ENCODE measurements at regions of chr1 and their contacts with region 1.

Region 1: GRCh38 chr1:206912445-206913095 is 9.2 kb downstream of the FCMR start:
- DNase-seq: peak; percentile 77
- ATAC-seq: peak; percentile 45
- H3K4me3 Mint-ChIP-seq: no peak overlapping the region
- H3K27ac Mint-ChIP-seq: peak overlapping the region; percentile 63
- H3K4me1 Mint-ChIP-seq: peaks cover 86% of the 10 kb centered on the region
- H3K27me3 Mint-ChIP-seq: no peaks in the 10 kb centered on the region
- CTCF ChIP-seq: peak; percentile 80

Region 2: GRCh38 chr1:206635080-206635977 is 277.2 kb before region 1 on chr1 and contains the start of gene DYRK3:
- CTCF ChIA-PET with region 1: interaction called, 11 read pairs
- POLR2A ChIA-PET with region 1: no interaction called
- intact Hi-C with region 1: no loop called
- DNase-seq: peak; percentile 93
- ATAC-seq: peak; percentile 93
- H3K4me3 Mint-ChIP-seq: peak within 1 kb of the TSS; percentile 78
- H3K27ac Mint-ChIP-seq: peak within 1 kb of the TSS; percentile 88
- H3K4me1 Mint-ChIP-seq: peaks cover 25% of the 10 kb centered on the region
- H3K27me3 Mint-ChIP-seq: peaks cover 28% of the 10 kb centered on the region
- CTCF ChIP-seq: no peak
- total RNA-seq, gene DYRK3: 4.7 to 4.9 TPM

Region 3: DNA sequence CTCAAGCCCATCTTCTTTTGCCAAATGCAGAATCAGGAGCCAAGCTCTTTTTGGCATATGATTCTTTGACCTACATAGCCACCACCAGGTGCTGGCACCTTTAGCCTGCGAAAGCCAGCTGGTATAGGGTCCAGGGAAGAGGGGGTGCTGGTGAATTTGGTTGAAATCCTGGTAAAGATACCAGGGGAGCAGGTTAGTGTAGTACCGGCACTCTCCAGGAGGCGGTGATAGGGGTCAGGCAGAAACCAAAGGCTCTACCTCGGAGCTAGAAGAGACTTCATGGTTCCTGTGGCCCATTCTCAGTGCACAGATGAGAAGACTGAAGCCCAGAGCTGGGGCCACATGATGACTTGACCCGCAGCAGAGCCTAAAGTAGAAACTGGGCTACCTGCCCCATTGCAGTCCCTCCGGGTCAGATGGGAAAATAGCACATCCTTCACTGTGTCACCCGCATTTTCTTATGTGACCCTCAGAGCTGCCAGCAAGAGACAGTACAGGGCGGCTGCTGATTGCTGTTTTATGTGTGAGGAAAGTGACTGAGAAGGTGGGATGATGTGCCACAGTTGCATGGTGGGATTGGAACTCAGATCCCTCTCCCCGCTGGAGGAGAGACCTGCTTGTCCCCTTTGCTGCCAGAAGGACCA is 177.9 kb before region 1 on chr1:
- CTCF ChIA-PET with region 1: interaction called, 81 read pairs
- POLR2A ChIA-PET with region 1: interaction called, 3 read pairs
- intact Hi-C with region 1: loop called (anchors 5 kb)
- DNase-seq: peak; percentile 80
- ATAC-seq: peak; percentile 48
- H3K4me3 Mint-ChIP-seq: no peak overlapping the region
- H3K27ac Mint-ChIP-seq: peak overlapping the region; percentile 22
- H3K4me1 Mint-ChIP-seq: peaks cover 64% of the 10 kb centered on the region
- H3K27me3 Mint-ChIP-seq: no peaks in the 10 kb centered on the region
- CTCF ChIP-seq: peak; percentile 93

Region 4: GRCh38 chr1:206834711-206835110 is 77.9 kb before region 1 on chr1:
- CTCF ChIA-PET with region 1: interaction called, 35 read pairs
- POLR2A ChIA-PET with region 1: no interaction called
- intact Hi-C with region 1: no loop called
- DNase-seq: no peak
- ATAC-seq: no peak
- H3K4me3 Mint-ChIP-seq: no peak overlapping the region
- H3K27ac Mint-ChIP-seq: no peak overlapping the region
- H3K4me1 Mint-ChIP-seq: peaks cover 25% of the 10 kb centered on the region
- H3K27me3 Mint-ChIP-seq: peaks cover 4% of the 10 kb centered on the region
- CTCF ChIP-seq: no peak

Region 5: GRCh38 chr1:206872139-206872538 is 40.4 kb before region 1 on chr1:
- CTCF ChIA-PET with region 1: interaction called, 100 read pairs
- POLR2A ChIA-PET with region 1: interaction called, 3 read pairs
- intact Hi-C with region 1: no loop called
- DNase-seq: no peak
- ATAC-seq: no peak
- H3K4me3 Mint-ChIP-seq: no peak overlapping the region
- H3K27ac Mint-ChIP-seq: no peak overlapping the region
- H3K4me1 Mint-ChIP-seq: no peaks in the 10 kb centered on the region
- H3K27me3 Mint-ChIP-seq: no peaks in the 10 kb centered on the region
- CTCF ChIP-seq: no peak

Region 6: DNA sequence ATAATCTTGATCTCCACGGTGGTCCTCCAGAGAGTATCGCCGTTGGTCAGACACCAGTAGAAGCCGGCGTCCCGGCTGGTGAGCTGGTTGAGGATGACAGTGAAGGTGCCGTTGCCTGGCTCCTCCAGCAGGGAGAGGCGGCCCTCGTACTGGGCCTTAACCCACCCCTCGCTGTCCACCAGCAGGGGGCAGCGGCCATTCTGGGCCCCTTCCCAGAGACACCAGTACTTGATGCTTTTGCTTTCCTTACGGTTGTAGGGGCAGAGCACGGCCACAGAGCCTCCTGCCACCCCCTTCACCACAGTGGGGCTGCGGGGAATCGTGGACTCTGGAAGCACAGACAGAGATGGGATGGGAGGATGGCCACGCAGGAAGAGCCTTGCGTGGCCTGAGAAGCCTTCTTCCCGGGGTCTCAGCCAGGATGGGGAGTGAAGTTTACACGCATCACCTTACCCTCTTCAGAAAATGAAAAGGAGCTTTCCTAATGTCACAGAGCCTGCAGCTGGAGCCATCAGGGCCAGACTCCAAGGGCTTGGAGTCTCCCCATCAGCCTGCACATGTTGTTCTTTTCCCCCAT is 23.0 kb after region 1 on chr1:
- CTCF ChIA-PET with region 1: interaction called, 289 read pairs
- POLR2A ChIA-PET with region 1: interaction called, 4 read pairs
- intact Hi-C with region 1: no loop called
- DNase-seq: peak; percentile 71
- ATAC-seq: peak; percentile 58
- H3K4me3 Mint-ChIP-seq: no peak overlapping the region
- H3K27ac Mint-ChIP-seq: no peak overlapping the region
- H3K4me1 Mint-ChIP-seq: peaks cover 24% of the 10 kb centered on the region
- H3K27me3 Mint-ChIP-seq: no peaks in the 10 kb centered on the region
- CTCF ChIP-seq: peak; percentile 75

Region 7: GRCh38 chr1:207052911-207053769 is 140.6 kb after region 1 on chr1 and contains the start of gene PFKFB2:
- CTCF ChIA-PET with region 1: no interaction called
- POLR2A ChIA-PET with region 1: no interaction called
- intact Hi-C with region 1: no loop called
- DNase-seq: peak; percentile 97
- ATAC-seq: peak; percentile 87
- H3K4me3 Mint-ChIP-seq: peak within 1 kb of the TSS; percentile 99
- H3K27ac Mint-ChIP-seq: peak within 1 kb of the TSS; percentile 84
- H3K4me1 Mint-ChIP-seq: peaks cover 30% of the 10 kb centered on the region
- H3K27me3 Mint-ChIP-seq: no peaks in the 10 kb centered on the region
- CTCF ChIP-seq: no peak
- total RNA-seq, gene PFKFB2: 3.5 to 4.3 TPM

Region 8: DNA sequence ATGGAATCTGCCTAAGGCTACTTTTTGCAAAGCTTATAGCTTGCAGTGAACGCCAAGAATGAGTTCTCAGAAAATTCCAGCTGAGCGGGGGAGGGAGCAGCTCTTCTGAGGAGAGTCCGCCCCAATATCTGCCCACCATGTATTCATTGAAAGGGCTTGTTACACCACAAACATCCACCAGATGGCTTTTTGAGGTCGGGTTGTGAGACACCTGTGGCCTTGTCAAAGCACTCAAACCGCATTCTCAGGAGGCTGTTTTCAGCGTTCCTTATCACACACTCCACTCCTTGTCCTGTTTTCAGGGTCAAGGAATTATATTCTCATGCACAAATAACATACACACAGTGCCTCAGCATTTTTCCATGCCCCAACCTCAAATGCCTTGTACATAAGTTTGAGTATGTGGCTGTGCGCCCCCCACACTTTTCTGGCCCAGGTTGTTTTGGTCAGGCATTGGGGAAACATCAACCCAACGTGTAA is 172.2 kb after region 1 on chr1:
- CTCF ChIA-PET with region 1: no interaction called
- POLR2A ChIA-PET with region 1: no interaction called
- intact Hi-C with region 1: no loop called
- DNase-seq: peak; percentile 73
- ATAC-seq: peak; percentile 83
- H3K4me3 Mint-ChIP-seq: no peak overlapping the region
- H3K27ac Mint-ChIP-seq: no peak overlapping the region
- H3K4me1 Mint-ChIP-seq: peaks cover 25% of the 10 kb centered on the region
- H3K27me3 Mint-ChIP-seq: peaks cover 2% of the 10 kb centered on the region
- CTCF ChIP-seq: peak; percentile 70

Measured in activated CD8-positive, alpha-beta T cell treated with anti-CD3 and anti-CD28 coated beads for 36 hours (primary cell).